ENCODE measurements at regions of chr18 and their contacts with region 1.

Region 1: GRCh38 chr18:77000527-77000926 is 132.1 kb downstream of the MBP start:
- DNase-seq: no peak
- ATAC-seq: peak; percentile 61
- H3K4me3 Mint-ChIP-seq: no peak overlapping the region
- H3K27ac Mint-ChIP-seq: no peak overlapping the region
- H3K4me1 Mint-ChIP-seq: peaks cover 18% of the 10 kb centered on the region
- H3K27me3 Mint-ChIP-seq: no peaks in the 10 kb centered on the region
- CTCF ChIP-seq: peak; percentile 82

Region 2: DNA sequence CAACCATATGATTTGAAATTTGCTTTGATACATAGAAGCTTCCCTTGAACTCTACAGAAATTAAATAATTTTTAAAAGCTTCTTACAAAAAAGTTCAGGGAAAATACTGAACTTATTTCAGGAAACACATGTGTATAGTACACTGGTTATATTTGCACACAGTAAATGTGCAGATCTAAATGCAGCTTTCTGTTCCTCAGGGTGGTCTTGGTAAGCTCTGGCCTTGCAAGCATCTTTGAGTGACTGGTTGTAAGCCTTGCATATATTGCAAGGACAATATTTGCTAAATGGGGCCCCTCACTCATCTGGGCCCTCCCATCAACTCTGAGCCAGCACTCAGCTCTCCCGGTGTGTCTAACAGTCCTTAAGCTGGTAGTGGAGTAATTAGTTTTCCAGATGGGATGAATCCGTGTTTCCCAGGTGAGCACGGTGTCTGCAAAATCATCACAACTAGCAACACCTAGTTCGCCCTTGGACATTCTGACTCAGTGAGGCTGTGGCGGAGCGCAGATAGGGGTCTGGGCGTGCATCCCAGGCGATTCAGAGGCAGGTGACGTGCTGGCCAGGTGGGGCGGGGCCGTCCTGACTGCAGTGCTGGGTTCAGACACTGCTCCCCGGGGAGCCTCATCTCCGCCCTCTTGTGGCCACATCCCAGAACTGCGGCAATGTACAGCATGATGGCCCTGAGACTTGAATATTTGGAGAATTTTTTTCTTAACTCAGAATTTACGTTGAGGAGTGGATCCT is 17.5 kb before region 1 on chr18:
- CTCF ChIA-PET with region 1: interaction called, 10 read pairs
- POLR2A ChIA-PET with region 1: no interaction called
- intact Hi-C with region 1: no loop called
- DNase-seq: peak; percentile 80
- ATAC-seq: peak; percentile 79
- H3K4me3 Mint-ChIP-seq: peak overlapping the region; percentile 35
- H3K27ac Mint-ChIP-seq: peak overlapping the region; percentile 69
- H3K4me1 Mint-ChIP-seq: peaks cover 56% of the 10 kb centered on the region
- H3K27me3 Mint-ChIP-seq: no peaks in the 10 kb centered on the region
- CTCF ChIP-seq: no peak

Region 3: DNA sequence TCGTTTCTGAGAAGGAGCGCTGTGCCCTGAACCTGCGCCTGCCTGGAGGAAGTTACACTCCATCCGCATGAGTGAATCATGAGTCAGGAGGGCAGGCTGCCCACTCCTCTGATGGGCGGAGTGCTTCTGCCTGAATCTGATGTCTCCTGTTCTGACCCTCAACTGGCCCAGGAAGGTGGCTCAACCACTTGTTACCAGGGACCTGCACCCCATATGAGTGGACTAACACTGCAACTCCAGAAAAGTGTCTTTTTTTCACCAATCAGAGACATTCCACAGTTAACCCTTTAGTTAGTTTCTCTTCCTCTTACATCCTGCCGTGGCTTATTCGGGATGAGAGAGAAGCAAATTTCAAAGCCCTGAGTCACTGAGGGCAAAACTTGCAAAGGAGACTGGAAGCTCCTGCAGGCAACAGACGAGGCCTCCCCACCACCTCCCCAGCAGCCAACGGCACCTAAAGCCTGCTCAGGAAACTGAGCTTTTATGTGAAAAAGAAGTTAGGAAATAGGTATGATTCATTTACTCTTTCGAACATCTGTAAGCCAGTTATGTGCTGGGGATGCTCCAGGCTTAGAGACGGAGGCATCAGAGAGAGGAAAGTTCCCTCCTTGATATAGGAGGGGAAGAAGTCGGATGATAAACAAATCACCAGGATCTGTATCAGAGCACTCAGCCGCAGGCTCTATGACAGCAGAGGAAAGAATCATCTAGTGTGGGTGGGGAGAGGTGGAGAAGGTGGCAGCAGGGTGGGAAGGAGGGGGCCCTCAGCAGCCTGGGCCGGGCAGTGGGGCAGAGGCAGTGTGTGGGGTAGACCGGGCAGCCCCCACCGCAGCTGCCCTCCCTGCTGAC is 101.1 kb after region 1 on chr18:
- CTCF ChIA-PET with region 1: interaction called, 7 read pairs
- POLR2A ChIA-PET with region 1: interaction called, 4 read pairs
- intact Hi-C with region 1: loop called (anchors 5 kb)
- DNase-seq: no peak
- ATAC-seq: peak; percentile 68
- H3K4me3 Mint-ChIP-seq: peak overlapping the region; percentile 79
- H3K27ac Mint-ChIP-seq: peak overlapping the region; percentile 95
- H3K4me1 Mint-ChIP-seq: peaks cover 92% of the 10 kb centered on the region
- H3K27me3 Mint-ChIP-seq: no peaks in the 10 kb centered on the region
- CTCF ChIP-seq: no peak

Region 4: DNA sequence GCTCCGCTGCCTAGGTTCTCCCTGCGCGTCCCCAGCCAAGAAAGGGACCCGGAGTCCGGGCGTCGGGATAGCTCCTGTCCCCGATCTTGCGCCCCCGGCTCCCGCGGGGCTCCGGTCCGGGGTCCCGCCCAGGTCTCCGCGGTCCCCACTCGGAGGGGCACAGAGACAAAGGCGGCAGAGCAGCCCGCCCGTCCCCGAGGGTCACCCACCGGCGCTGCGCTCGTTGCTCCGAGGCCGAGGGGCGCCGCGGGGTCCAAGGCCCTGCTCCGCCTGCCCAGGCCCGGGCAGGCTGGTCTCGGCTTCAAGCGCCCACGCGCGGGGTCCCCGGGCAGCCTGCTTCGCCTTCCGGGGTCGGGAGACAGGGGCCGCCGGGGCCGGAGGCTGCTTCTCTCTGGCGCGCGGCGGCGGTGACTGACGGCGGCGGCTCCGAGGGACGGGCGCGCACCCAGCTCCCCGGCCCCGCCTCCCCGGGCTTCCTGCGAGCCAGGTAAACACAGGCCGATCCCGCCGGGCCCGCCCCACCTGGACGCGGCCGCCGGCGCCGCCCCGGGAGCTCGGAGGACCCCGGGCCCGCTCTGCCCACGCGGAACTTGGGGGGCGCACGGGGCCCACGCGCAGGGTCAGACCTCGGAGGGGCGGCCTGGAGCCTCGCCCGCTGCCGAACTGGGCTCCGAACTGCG is 132.0 kb after region 1 on chr18 and contains the start of gene MBP:
- CTCF ChIA-PET with region 1: interaction called, 3 read pairs
- POLR2A ChIA-PET with region 1: interaction called, 4 read pairs
- intact Hi-C with region 1: loop called (anchors 2 kb)
- DNase-seq: peak; percentile 72
- ATAC-seq: peak; percentile 42
- H3K4me3 Mint-ChIP-seq: peak within 1 kb of the TSS; percentile 95
- H3K27ac Mint-ChIP-seq: peak within 1 kb of the TSS; percentile 91
- H3K4me1 Mint-ChIP-seq: peaks cover 56% of the 10 kb centered on the region
- H3K27me3 Mint-ChIP-seq: no peaks in the 10 kb centered on the region
- CTCF ChIP-seq: no peak
- total RNA-seq, gene MBP: 88.0 and 92.7 TPM in 2 replicates

Region 5: GRCh38 chr18:77470569-77471413 is 470.3 kb after region 1 on chr18:
- CTCF ChIA-PET with region 1: no interaction called
- POLR2A ChIA-PET with region 1: no interaction called
- intact Hi-C with region 1: loop called (anchors 1 kb)
- DNase-seq: no peak
- ATAC-seq: no peak
- H3K4me3 Mint-ChIP-seq: no peak overlapping the region
- H3K27ac Mint-ChIP-seq: no peak overlapping the region
- H3K4me1 Mint-ChIP-seq: no peaks in the 10 kb centered on the region
- H3K27me3 Mint-ChIP-seq: peaks cover 10% of the 10 kb centered on the region
- CTCF ChIP-seq: no peak